Activated T-helper 1 cell treated with anti-CD3 and anti-CD28 coated beads, Interleukin-12 subunit alpha, Interleukin-12 subunit beta, Interleukin-2, Interleukin-4 antibody, amounts not matched to agents 30 ng/mL and 10 ng/mL and 1 ng/mL, durations not matched to agents 14 hours and 24 hours and 36 hours (primary cell): ENCODE measurements at regions of chr5 and their contacts with region 1.

Region 1: GRCh38 chr5:95983080-95983479 is 21.4 kb upstream of the ELL2 start:
- DNase-seq: no peak
- H3K4me3 Mint-ChIP-seq: no peak overlapping the region
- H3K27ac Mint-ChIP-seq: no peak overlapping the region
- H3K4me1 Mint-ChIP-seq: no peaks in the 10 kb centered on the region
- H3K27me3 Mint-ChIP-seq: no peaks in the 10 kb centered on the region

Region 2: GRCh38 chr5:95969651-95970358 is 13.3 kb before region 1 on chr5:
- intact Hi-C with region 1: loop called (anchors 2 kb)
- DNase-seq: no peak
- H3K4me3 Mint-ChIP-seq: no peak overlapping the region
- H3K27ac Mint-ChIP-seq: no peak overlapping the region
- H3K4me1 Mint-ChIP-seq: peaks cover 9% of the 10 kb centered on the region
- H3K27me3 Mint-ChIP-seq: no peaks in the 10 kb centered on the region